ENCODE measurements at regions of chr2 and their contacts with region 1.

Region 1: DNA sequence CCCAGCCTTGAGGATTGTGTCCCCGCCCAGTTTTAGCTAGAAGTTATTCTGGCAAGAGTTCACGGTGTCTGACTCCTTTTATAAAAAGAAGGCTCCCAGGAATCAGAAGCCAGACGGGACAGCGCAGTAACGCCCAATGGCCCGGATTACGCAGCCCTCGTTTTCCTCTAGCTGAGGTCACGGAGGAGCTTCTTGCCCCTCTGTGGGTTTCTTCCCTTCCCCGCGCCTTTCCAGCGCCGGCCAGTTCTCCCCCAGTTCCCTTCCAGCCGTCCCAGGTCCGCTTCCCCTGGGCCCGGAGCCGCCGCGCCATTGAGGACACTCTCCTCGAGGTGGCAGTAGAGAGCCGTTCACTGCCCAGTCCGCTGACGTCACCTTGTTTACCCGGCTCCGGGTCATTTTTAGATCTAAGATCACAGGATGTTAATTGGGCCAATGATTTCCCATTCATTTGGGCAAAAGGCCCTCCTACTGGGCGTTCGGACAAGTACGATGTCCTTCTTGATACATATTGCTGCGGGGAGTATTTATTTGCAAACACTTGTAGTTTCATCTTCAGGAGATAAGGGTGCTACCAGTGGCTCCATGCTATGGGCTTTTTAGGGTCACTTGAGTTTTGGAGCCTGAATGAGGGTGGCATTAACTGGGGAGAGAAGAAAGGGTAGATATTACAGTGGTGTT is 81.5 kb upstream of the PPM1B start:
- DNase-seq: peak; percentile 83 to 93 (median 89)
- H3K4me3 ChIP-seq: peak overlapping the region in 58 of 59 donors; percentile 18 to 69 (median 46)
- H3K27ac ChIP-seq: peak overlapping the region; percentile 58 to 99 (median 95)
- H3K27me3 ChIP-seq: no peaks in the 10 kb centered on the region
- CTCF ChIP-seq: peak; percentile 90 to 100 (median 97)

Region 2: GRCh38 chr2:43995733-43996533 is 91.2 kb before region 1 on chr2 and contains the start of gene LRPPRC:
- intact Hi-C with region 1: loop called in 1 of 2 experiments (anchors 5 kb)
- DNase-seq: peak; percentile 88 to 97 (median 95)
- H3K4me3 ChIP-seq: peak within 1 kb of the TSS; percentile 56 to 100 (median 99)
- H3K27ac ChIP-seq: peak within 1 kb of the TSS; percentile 59 to 96 (median 90)
- H3K27me3 ChIP-seq: no peaks in the 10 kb centered on the region
- CTCF ChIP-seq: peak in 15 of 56 donors; percentile 7 to 28 (median 12)
- total RNA-seq, gene LRPPRC: 53.4 to 119 (median 92.9) TPM

Region 3: DNA sequence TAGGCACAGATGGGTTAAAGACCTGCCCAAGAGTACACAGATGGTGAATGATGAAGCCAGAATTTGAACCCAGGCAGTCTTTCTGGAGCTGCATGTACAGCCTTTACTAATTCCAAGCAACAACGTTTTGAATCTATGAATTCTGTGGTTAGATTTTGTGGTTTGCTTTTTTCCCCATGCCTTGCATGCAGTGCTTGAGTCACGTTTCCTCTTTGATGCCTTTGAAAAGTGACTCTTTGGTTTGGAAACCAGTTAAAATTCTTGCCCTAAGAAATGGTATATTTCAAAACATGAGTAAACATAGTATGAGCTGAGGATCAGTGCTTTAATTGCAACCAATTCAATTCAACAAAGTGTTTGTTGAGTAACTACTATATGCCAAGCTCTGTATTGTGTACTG is 33.3 kb after region 1 on chr2:
- intact Hi-C with region 1: loop called in 1 of 2 experiments (anchors 5 kb)
- DNase-seq: no peak
- H3K4me3 ChIP-seq: no peak overlapping the region
- H3K27ac ChIP-seq: no peak overlapping the region
- H3K27me3 ChIP-seq: no peaks in the 10 kb centered on the region
- CTCF ChIP-seq: no peak

Region 4: GRCh38 chr2:44167940-44168680 is 80.9 kb after region 1 on chr2:
- intact Hi-C with region 1: loop called (anchors 1 to 2 kb)
- DNase-seq: peak; percentile 92 to 100 (median 100)
- H3K4me3 ChIP-seq: peak overlapping the region; percentile 48 to 100 (median 73)
- H3K27ac ChIP-seq: peak overlapping the region; percentile 86 to 100 (median 99)
- H3K27me3 ChIP-seq: no peaks in the 10 kb centered on the region
- CTCF ChIP-seq: peak in 12 of 56 donors; percentile 4 to 37 (median 14)

Region 5: GRCh38 chr2:44244129-44244871 is 157.1 kb after region 1 on chr2:
- intact Hi-C with region 1: loop called (anchors 1 to 5 kb)
- DNase-seq: peak in 7 of 10 donors; percentile 56 to 76 (median 63)
- H3K4me3 ChIP-seq: peak overlapping the region; percentile 14 to 74 (median 51)
- H3K27ac ChIP-seq: peak overlapping the region in 58 of 59 donors; percentile 27 to 94 (median 80)
- H3K27me3 ChIP-seq: no peaks in the 10 kb centered on the region
- CTCF ChIP-seq: peak; percentile 55 to 94 (median 78)

Region 6: GRCh38 chr2:44291281-44292248 is 204.4 kb after region 1 on chr2:
- intact Hi-C with region 1: loop called (anchors 2 kb)
- DNase-seq: peak in 9 of 10 donors; percentile 21 to 77 (median 57)
- H3K4me3 ChIP-seq: peak overlapping the region in 27 of 59 donors; percentile 1 to 48 (median 26)
- H3K27ac ChIP-seq: peak overlapping the region in 42 of 59 donors; percentile 5 to 80 (median 60)
- H3K27me3 ChIP-seq: no peaks in the 10 kb centered on the region
- CTCF ChIP-seq: peak; percentile 11 to 91 (median 70)

Measured in dorsolateral prefrontal cortex (tissue), 120 donors.